Right ventricle myocardium inferior (tissue), 1 donor: ENCODE measurements at regions of chr1 and their contacts with region 1.

Region 1: GRCh38 chr1:247103859-247104591 is at the start of gene ZNF669:
- DNase-seq: peak; percentile 99
- ATAC-seq: peak; percentile 100
- total RNA-seq, gene ZNF669: 3.7 TPM

Region 2: DNA sequence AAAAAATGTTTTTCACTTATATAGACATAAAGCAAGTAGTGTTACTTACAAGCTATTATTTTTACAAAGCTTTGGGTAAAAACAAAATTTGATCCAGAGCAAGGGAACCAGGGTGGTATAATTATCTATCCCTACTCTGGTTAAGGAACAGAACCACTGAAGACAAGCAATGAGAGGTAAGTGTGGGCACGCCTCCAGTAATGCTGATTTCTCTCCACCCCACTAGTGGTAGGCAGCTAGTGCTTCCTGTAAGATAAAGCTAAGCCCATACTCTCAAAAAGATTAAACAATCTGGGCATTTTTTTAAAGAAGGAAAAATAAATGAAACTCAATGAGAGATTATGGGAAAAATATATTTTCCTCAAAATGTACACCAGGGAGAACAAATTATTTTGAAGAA is 560.0 kb before region 1 on chr1:
- intact Hi-C with region 1: no loop called
- DNase-seq: no peak
- ATAC-seq: no peak

Region 3: GRCh38 chr1:246730839-246731238 is 373.2 kb before region 1 on chr1:
- intact Hi-C with region 1: no loop called
- DNase-seq: no peak
- ATAC-seq: no peak

Region 4: DNA sequence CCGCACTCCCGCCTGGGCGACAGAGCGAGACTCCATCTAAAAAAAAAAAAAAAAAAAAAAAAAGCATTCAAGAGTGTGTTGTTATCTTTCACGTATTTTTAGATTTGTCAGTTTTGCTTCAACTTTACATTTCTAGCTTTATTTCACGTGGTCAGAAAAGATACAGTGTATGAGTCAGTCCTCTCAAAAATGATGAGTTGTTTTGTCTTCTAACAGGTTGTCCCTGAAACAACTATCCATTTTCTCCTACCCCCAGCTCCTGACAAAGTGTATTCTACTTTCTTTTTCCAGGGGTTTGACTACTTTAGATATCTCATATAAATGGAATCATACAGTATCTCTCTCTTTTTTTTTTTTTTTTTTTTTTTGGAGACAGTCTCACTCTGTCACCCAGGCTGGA is 90.6 kb before region 1 on chr1:
- intact Hi-C with region 1: no loop called
- DNase-seq: no peak
- ATAC-seq: no peak

Region 5: GRCh38 chr1:247078261-247079140 is 25.5 kb before region 1 on chr1 and contains the start of gene ZNF670:
- intact Hi-C with region 1: loop called (anchors 1 kb)
- DNase-seq: peak; percentile 96
- ATAC-seq: peak; percentile 100
- total RNA-seq, gene ZNF670: 1.0 TPM

Region 6: GRCh38 chr1:247210376-247211117 is 106.5 kb after region 1 on chr1:
- intact Hi-C with region 1: loop called (anchors 5 kb)
- DNase-seq: peak; percentile 99
- ATAC-seq: peak; percentile 100

Region 7: GRCh38 chr1:247331172-247331991 is 227.4 kb after region 1 on chr1 and contains the start of gene ZNF496:
- intact Hi-C with region 1: loop called (anchors 10 kb)
- DNase-seq: peak; percentile 87
- ATAC-seq: peak; percentile 83
- total RNA-seq, gene ZNF496: 10.5 TPM

Region 8: DNA sequence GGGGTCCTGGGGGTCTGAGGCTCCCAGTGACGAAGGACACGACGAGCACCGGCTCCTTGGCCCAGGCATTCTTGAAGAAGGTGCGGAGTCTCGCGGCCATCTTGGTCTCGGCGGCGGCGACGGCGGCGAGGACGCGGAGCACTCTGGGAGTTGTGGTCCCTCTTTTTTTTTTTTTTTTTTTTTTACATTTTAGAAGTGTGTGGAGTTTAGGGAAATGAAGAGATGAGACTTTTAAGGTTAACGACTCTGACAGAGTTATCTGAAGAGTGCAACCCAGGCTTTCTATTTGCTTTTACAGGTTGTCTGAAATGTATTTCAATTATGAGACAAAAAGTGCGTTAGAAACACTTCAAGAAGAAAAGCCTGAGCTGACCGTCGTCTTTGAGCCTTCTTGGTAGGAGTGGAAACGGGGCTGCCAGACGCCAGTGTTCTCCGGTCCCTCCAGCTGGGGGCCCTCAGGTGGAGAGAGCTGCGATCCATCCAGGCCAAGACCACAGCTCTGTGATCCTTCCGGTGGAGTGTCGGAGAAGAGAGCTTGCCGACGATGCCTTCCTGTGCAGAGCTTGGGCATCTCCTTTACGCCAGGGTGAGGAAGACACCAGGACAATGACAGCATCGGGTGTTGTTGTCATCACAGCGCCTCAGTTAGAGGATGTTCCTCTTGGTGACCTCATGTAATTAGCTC is 344.2 kb after region 1 on chr1:
- intact Hi-C with region 1: loop called (anchors 5 kb)
- DNase-seq: peak; percentile 89
- ATAC-seq: peak; percentile 90